Vagina (tissue), 2 donors: ENCODE measurements at regions of chr2 and their contacts with region 1.

Region 1: DNA sequence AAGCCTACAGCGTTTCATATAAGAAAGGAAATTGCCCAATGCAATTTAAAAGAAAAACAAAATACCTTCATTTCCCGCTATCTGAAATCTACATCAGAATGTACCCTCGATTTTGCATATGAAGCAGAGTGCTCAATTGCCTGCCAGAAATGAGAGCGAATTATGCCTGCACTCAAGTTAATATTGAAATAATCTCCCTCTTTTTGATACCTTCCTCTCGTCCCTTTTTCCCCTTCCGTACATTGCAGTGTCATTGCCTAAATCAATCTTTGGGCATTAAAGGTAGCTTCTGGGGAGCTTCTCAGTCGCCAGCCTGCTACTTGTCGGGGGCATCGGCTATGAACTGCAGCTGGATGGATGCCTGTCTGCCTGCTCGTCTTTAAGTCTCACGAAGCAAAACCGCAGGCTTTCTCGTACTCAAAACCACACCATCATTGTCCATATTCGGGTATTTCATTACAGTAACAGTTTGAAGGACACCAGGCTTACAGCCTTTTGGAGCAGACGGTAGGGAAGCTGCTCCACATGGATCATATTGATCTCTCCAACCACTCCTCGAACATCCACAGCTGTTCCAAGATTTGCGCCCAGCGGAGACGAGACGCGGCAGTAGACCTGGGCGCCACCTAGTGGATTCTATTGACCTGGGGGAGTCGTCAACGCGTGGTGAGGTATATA is 64.0 kb upstream of the HNRNPA3 start:
- DNase-seq: no peak
- H3K4me3 ChIP-seq: peak overlapping the region; percentile 39 to 46
- H3K27ac ChIP-seq: peak overlapping the region; percentile 34
- H3K4me1 ChIP-seq: peaks cover 6% of the 10 kb centered on the region
- H3K27me3 ChIP-seq: no peaks in the 10 kb centered on the region
- CTCF ChIP-seq: peak; percentile 48 to 72 (median 57)
- POLR2A ChIP-seq: no peak

Region 2: DNA sequence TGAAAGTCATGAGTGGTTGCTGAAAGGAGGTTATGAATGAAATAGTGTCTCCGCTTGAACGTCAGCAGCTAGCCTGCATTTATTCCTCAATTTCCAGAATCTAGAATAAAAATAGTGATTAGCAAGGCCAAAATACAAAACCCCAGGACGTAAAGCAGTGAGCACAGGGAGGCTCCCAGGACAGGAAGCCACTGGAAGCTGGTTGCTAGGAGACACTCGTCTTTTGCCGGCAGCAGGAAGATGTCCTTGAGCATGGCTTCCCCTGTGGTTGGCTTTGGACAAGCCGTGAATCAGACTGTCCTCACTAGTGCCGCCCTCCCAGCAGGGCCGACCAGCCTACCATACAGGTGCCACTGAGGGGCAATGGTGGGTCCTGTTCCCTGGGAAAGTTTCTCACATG is 505.0 kb before region 1 on chr2:
- intact Hi-C with region 1: loop called (anchors 10 kb)
- DNase-seq: no peak
- H3K4me3 ChIP-seq: no peak overlapping the region
- H3K27ac ChIP-seq: no peak overlapping the region
- H3K4me1 ChIP-seq: no peaks in the 10 kb centered on the region
- H3K27me3 ChIP-seq: no peaks in the 10 kb centered on the region
- CTCF ChIP-seq: no peak
- POLR2A ChIP-seq: no peak

Region 3: GRCh38 chr2:177164584-177165052 is 16.0 kb after region 1 on chr2:
- intact Hi-C with region 1: no loop called
- DNase-seq: peak in 1 of 2 donors; percentile 92
- H3K4me3 ChIP-seq: peak overlapping the region; percentile 24 to 41
- H3K27ac ChIP-seq: peak overlapping the region; percentile 93
- H3K4me1 ChIP-seq: peaks cover 44% of the 10 kb centered on the region
- H3K27me3 ChIP-seq: no peaks in the 10 kb centered on the region
- CTCF ChIP-seq: peak; percentile 92 to 100 (median 99)
- POLR2A ChIP-seq: no peak